ENCODE measurements at regions of chrX and their contacts with region 1.

Region 1: DNA sequence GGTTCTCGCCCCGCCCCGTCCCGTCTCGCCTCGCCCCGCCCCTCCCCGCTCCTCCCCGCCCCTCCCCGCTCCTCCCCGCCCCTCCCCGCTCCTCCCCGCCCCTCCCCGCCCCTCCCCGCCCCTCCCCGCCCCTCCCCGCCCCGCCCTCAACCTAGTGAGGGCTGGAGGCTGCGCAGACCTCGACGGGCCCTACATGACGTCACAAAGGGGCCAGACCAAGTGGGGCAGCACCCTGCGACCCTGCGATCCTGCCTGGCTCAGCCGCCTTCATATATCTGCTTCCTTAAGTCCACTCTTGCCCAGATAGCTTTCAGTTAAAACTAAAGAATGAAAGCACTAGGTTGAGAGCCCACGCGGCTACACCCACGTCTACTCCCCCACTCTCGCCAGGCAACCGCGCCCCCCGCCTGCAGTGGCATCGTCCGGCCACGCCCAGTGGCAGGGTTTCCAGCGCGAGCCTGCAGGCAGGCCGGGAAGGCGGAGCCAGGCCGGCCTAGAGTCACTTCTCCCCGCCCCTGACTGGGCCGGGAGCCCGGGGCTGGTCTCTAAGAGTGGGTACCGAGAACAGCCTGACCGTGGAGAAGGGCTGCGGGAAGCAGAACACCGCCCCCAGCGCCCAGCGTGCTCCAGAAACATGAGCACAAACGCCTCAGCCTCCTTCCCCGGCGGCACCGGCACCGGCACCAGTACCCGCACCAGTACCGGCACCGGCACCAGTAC is 1.5 kb upstream of the MAOA start:
- DNase-seq: peak; percentile 85
- ATAC-seq: peak; percentile 98
- H3K4me3 ChIP-seq: peak overlapping the region; percentile 74 to 79 (median 78); a peak in 4 of 6 replicates
- H3K27ac ChIP-seq: peak overlapping the region; percentile 82
- H3K4me1 ChIP-seq: no peaks in the 10 kb centered on the region
- H3K27me3 ChIP-seq: no peaks in the 10 kb centered on the region
- CTCF ChIP-seq: peak; percentile 59
- EP300 ChIP-seq: no peak
- POLR2A ChIP-seq: peak; percentile 46 to 68; a peak in 3 of 4 replicates
- RAD21 ChIP-seq: no peak; the same call in 1 of the 2 replicates

Region 2: DNA sequence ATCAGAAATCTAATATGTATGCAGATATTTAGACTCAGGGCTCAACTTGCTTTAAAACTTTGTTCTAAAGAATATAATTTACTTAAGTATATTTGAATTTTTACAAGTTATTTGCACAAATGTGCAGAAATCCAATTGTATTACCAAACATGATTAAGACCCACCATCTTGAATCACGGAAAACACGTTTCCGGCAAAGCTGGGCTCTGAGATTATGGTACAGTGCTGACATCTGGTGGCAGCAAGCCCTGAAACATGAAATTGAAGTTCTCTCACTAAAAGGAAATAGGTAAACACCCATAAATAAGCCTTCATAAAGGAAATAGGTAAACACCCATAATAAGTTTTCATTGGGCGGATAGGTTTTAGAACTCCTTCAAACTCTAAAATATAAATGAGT is 96.8 kb before region 1 on chrX:
- CTCF ChIA-PET with region 1: no interaction called
- POLR2A ChIA-PET with region 1: no interaction called
- in situ Hi-C with region 1: no loop called
- intact Hi-C with region 1: loop called (anchors 1 kb)
- DNase-seq: peak; percentile 31
- ATAC-seq: no peak
- H3K4me3 ChIP-seq: no peak overlapping the region
- H3K27ac ChIP-seq: no peak overlapping the region
- H3K4me1 ChIP-seq: peaks cover 6% of the 10 kb centered on the region
- H3K27me3 ChIP-seq: no peaks in the 10 kb centered on the region
- CTCF ChIP-seq: peak; percentile 69
- EP300 ChIP-seq: no peak
- POLR2A ChIP-seq: no peak
- RAD21 ChIP-seq: peak; percentile 29; the same call in 1 of the 2 replicates

Region 3: DNA sequence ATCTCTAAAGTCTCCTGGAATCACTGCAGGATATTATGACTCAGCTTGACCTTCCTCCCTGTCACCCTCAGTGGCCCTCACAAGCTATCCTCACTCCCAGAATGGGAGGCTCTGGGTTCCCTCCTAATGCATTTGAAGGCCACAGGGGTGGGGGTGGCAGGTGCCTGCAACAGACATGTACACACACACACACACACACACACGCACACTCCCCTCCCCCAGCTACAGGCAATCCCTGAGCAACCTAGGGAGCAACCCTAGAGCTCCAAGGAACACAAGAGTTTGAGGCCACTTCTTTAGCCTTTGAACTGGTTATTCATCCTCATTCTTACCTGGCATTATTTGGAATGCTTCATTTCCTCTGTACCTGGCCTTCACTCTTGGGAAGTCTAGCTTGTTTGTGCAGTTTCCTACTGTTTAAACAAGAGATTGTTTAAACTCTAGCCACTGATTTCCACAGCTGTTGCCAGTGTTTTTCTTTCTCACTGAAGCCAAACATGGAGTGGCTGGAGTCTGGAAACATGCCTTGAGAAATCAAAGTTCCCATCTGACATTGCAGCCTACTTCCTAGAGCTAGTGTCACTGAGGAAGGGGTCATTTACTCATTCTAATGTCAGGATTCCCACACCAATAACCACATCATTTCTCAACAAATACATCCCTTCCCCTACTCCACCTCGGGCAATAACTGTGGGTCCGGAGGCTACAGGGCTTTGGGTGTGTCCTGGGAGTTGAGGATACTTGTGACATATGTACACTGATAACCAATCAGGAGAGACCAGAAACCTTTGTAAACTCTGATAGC is 39.2 kb after region 1 on chrX:
- CTCF ChIA-PET with region 1: no interaction called
- POLR2A ChIA-PET with region 1: interaction called, 20 read pairs
- in situ Hi-C with region 1: no loop called
- intact Hi-C with region 1: loop called (anchors 5 kb)
- DNase-seq: peak; percentile 89
- ATAC-seq: peak; percentile 92
- H3K4me3 ChIP-seq: no peak overlapping the region
- H3K27ac ChIP-seq: peak overlapping the region; percentile 76
- H3K4me1 ChIP-seq: peaks cover 74% of the 10 kb centered on the region
- H3K27me3 ChIP-seq: no peaks in the 10 kb centered on the region
- CTCF ChIP-seq: no peak
- EP300 ChIP-seq: peak in 1 of 2 experiments; percentile 81; a peak in 2 of 4 replicates
- POLR2A ChIP-seq: no peak
- RAD21 ChIP-seq: no peak

Region 4: DNA sequence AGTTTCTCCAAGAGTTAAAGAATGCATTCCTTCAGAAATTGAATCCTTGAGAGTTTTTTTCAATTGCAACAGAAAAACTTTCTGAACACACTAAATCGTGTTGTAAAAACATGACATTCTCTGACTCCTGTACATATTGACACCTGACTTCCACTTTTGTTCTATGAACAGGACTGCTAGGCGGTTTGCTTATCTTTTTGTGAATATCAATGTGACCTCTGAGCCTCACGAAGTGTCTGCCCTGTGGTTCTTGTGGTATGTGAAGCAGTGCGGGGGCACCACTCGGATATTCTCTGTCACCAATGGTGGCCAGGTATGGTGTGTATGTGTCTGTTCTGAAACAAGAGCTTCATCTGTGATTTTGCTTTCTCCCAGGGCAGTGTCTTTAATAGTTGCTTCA is 73.4 kb after region 1 on chrX:
- CTCF ChIA-PET with region 1: no interaction called
- POLR2A ChIA-PET with region 1: no interaction called
- in situ Hi-C with region 1: no loop called
- intact Hi-C with region 1: loop called (anchors 5 kb)
- DNase-seq: peak; percentile 35
- ATAC-seq: peak; percentile 64
- H3K4me3 ChIP-seq: no peak overlapping the region
- H3K27ac ChIP-seq: peak overlapping the region; percentile 26
- H3K4me1 ChIP-seq: peaks cover 30% of the 10 kb centered on the region
- H3K27me3 ChIP-seq: no peaks in the 10 kb centered on the region
- CTCF ChIP-seq: no peak
- EP300 ChIP-seq: no peak
- POLR2A ChIP-seq: no peak
- RAD21 ChIP-seq: no peak

Region 5: DNA sequence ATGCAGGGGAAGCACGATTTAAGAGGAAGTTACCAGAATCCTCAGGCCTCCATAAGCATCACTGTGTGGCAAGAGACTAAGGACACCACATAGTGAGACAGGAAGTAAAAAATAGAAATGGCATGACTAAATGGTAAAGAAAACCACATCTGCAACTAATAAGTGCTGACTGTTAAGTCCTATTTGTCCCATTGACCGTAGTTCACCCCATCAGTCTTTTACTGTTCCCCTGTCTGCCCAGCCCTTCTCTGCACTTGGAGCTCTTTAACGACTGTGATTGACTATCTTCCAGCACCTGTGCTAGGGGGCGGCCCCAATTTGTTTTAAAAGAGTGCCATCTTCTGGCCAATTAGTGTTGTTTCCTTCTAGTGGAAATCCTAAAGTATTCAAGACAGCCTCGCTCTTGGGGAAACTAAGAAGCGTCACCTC is 95.7 kb after region 1 on chrX:
- CTCF ChIA-PET with region 1: no interaction called
- POLR2A ChIA-PET with region 1: interaction called, 5 read pairs
- in situ Hi-C with region 1: loop called (anchors 10 kb)
- intact Hi-C with region 1: loop called (anchors 5 kb)
- DNase-seq: peak; percentile 57
- ATAC-seq: peak; percentile 88
- H3K4me3 ChIP-seq: no peak overlapping the region
- H3K27ac ChIP-seq: no peak overlapping the region
- H3K4me1 ChIP-seq: 0 out of 2 replicates have a peak, but pooled peaks cover 9% of the 10 kb centered on the region
- H3K27me3 ChIP-seq: no peaks in the 10 kb centered on the region
- CTCF ChIP-seq: peak; percentile 77
- EP300 ChIP-seq: no peak
- POLR2A ChIP-seq: no peak
- RAD21 ChIP-seq: peak; percentile 79

Measured in HepG2 (cell line).